IMR-90 (cell line): ENCODE measurements at regions of chr15 and their contacts with region 1.

Region 1: DNA sequence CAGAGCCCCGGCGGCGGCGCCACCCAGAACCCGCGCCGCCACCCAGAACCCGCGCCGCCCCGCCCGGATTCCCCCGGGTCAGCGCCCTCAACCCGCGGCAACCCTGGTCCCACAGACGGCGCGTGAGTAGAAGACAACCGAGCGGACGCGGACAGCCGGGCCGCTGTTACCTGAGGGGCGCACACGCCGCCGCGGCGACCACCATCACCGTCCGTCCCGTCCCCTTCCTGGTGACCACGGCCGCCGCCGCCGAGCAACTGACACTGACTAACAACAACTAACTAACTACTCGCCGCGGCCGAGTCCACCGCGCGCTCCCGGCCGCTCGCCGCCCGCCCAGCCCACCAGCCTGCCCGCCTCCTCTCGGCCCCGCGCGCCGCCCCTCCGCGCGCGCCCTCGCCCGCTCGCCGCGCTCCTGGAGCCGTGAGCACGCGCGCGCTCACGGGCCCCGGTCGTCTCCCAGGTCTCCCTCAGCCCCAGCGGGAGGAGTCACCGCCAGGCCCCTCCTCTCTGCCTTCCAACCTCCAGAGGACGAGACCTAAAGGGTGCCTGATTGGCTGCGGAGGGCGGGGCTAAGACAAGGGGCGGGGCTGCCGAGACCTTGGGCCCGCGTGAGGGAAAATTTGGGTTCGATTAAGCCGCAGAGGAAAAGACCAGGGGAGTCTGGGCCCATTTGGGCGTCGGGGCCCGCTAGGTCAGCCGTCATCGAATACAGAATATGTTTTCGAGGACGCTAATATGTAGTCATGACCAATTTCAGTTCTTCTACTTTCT is at the start of gene PEAK1:
- DNase-seq: peak; percentile 98
- ATAC-seq: peak; percentile 95
- H3K4me3 ChIP-seq: peak within 1 kb of the TSS; percentile 94
- H3K27ac ChIP-seq: peak within 1 kb of the TSS; percentile 99
- H3K4me1 ChIP-seq: peaks cover 12% of the 10 kb centered on the region
- H3K27me3 ChIP-seq: no peaks in the 10 kb centered on the region
- CTCF ChIP-seq: no peak
- POLR2A ChIP-seq: peak; percentile 91
- RAD21 ChIP-seq: peak; percentile 1; the same call in 1 of the 2 replicates
- total RNA-seq, gene PEAK1: 43.9 and 49.2 TPM in 2 replicates

Region 2: GRCh38 chr15:77186594-77187011 is 233.4 kb before region 1 on chr15:
- CTCF ChIA-PET with region 1: no interaction called
- POLR2A ChIA-PET with region 1: interaction called, 4 read pairs
- dilution Hi-C with region 1: no loop called
- in situ Hi-C with region 1: no loop called
- intact Hi-C with region 1: loop called (anchors 2 kb)
- DNase-seq: peak; percentile 47
- ATAC-seq: peak; percentile 55; the same call in 1 of the 2 replicates
- H3K4me3 ChIP-seq: no peak overlapping the region
- H3K27ac ChIP-seq: no peak overlapping the region
- H3K4me1 ChIP-seq: peaks cover 3% of the 10 kb centered on the region
- H3K27me3 ChIP-seq: no peaks in the 10 kb centered on the region
- CTCF ChIP-seq: peak; percentile 62
- POLR2A ChIP-seq: no peak
- RAD21 ChIP-seq: peak; percentile 66

Region 3: GRCh38 chr15:77393471-77393840 is 26.6 kb before region 1 on chr15:
- CTCF ChIA-PET with region 1: no interaction called
- POLR2A ChIA-PET with region 1: no interaction called
- dilution Hi-C with region 1: no loop called
- in situ Hi-C with region 1: no loop called
- intact Hi-C with region 1: no loop called
- DNase-seq: peak; percentile 60
- ATAC-seq: peak; percentile 53
- H3K4me3 ChIP-seq: no peak overlapping the region
- H3K27ac ChIP-seq: no peak overlapping the region
- H3K4me1 ChIP-seq: peaks cover 12% of the 10 kb centered on the region
- H3K27me3 ChIP-seq: no peaks in the 10 kb centered on the region
- CTCF ChIP-seq: no peak
- POLR2A ChIP-seq: no peak
- RAD21 ChIP-seq: no peak

Region 4: DNA sequence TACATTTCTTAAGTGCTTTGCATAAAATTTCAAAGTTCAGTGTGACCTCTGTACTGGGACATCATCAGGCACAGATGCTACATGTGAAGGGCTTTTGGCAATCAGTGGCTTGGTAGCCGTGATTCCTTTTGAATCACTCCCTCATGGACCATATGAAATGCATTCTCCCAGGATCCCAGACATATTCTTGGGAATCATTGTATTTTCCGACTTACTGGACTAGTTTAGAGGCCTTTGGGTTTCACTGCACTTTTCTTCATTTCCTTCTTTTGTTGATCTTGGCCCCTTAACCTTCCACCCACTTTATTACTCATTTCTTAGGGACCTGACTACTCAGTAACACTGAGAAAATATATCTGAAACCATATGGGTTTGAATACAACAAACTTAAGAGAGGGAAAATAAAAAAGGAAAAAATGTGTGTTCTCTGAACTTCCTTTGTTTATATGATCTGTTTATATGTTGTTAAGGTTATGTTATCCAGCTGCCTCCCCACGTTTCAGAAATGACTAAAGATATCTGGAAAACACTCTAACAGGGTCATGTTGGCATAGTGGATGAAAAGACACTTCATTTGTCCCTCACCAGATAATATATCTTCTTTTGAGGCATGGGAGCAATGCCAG is 35.8 kb after region 1 on chr15:
- CTCF ChIA-PET with region 1: interaction called, 4 read pairs
- POLR2A ChIA-PET with region 1: no interaction called
- dilution Hi-C with region 1: no loop called
- in situ Hi-C with region 1: no loop called
- intact Hi-C with region 1: loop called (anchors 2 kb)
- DNase-seq: peak; percentile 87
- ATAC-seq: peak; percentile 74
- H3K4me3 ChIP-seq: no peak overlapping the region
- H3K27ac ChIP-seq: peak overlapping the region; percentile 78
- H3K4me1 ChIP-seq: peaks cover 25% of the 10 kb centered on the region
- H3K27me3 ChIP-seq: no peaks in the 10 kb centered on the region
- CTCF ChIP-seq: no peak
- POLR2A ChIP-seq: no peak
- RAD21 ChIP-seq: no peak

Region 5: GRCh38 chr15:77496710-77497103 is 76.7 kb after region 1 on chr15:
- CTCF ChIA-PET with region 1: interaction called, 4 read pairs
- POLR2A ChIA-PET with region 1: interaction called, 3 read pairs
- dilution Hi-C with region 1: no loop called
- in situ Hi-C with region 1: no loop called
- intact Hi-C with region 1: loop called (anchors 1 kb)
- DNase-seq: peak; percentile 97
- ATAC-seq: peak; percentile 82
- H3K4me3 ChIP-seq: no peak overlapping the region
- H3K27ac ChIP-seq: peak overlapping the region; percentile 68
- H3K4me1 ChIP-seq: peaks cover 28% of the 10 kb centered on the region
- H3K27me3 ChIP-seq: no peaks in the 10 kb centered on the region
- CTCF ChIP-seq: peak; percentile 95
- POLR2A ChIP-seq: 0 out of 2 replicates have a peak, but pooled peaks have one; percentile 37
- RAD21 ChIP-seq: peak; percentile 99

Region 6: GRCh38 chr15:77533578-77534430 is 113.8 kb after region 1 on chr15:
- CTCF ChIA-PET with region 1: no interaction called
- POLR2A ChIA-PET with region 1: no interaction called
- dilution Hi-C with region 1: no loop called
- in situ Hi-C with region 1: no loop called
- intact Hi-C with region 1: no loop called
- DNase-seq: no peak
- ATAC-seq: no peak
- H3K4me3 ChIP-seq: no peak overlapping the region
- H3K27ac ChIP-seq: no peak overlapping the region
- H3K4me1 ChIP-seq: no peaks in the 10 kb centered on the region
- H3K27me3 ChIP-seq: peaks cover 30% of the 10 kb centered on the region
- CTCF ChIP-seq: no peak
- POLR2A ChIP-seq: no peak
- RAD21 ChIP-seq: no peak